ENCODE measurements at regions of chr4 and their contacts with region 1.

Region 1: GRCh38 chr4:128220286-128221235 is 67.1 kb downstream of the PGRMC2 start:
- DNase-seq: no peak
- H3K4me3 ChIP-seq: no peak overlapping the region
- H3K4me3 Mint-ChIP-seq: no peak overlapping the region
- H3K27ac Mint-ChIP-seq: no peak overlapping the region
- H3K4me1 ChIP-seq: no peaks in the 10 kb centered on the region
- H3K4me1 Mint-ChIP-seq: no peaks in the 10 kb centered on the region
- H3K27me3 ChIP-seq: no peaks in the 10 kb centered on the region
- H3K27me3 Mint-ChIP-seq: no peaks in the 10 kb centered on the region
- CTCF ChIP-seq: no peak

Region 2: DNA sequence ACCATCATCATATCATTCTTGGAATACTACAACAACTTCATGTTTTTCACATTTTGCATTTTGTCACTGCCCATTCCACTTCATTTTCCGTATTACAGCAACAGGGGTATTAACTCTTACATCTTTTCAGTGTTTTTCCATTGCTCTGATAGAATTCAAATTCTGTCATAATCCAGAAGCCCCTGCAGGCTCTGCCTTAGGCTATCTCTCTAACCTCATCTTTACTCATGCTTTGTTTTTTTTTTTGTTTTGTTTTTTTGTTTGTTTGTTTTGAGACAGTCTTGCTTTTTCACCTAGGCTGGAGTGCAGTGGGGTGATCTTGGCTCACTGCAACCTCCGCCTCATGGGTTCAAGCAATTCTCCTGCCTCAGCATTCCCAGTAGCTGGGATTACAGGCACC is 163.8 kb before region 1 on chr4:
- CTCF ChIA-PET with region 1: no interaction called
- POLR2A ChIA-PET with region 1: no interaction called
- intact Hi-C with region 1: no loop called
- DNase-seq: no peak
- H3K4me3 ChIP-seq: no peak overlapping the region
- H3K4me3 Mint-ChIP-seq: no peak overlapping the region
- H3K27ac Mint-ChIP-seq: no peak overlapping the region
- H3K4me1 ChIP-seq: no peaks in the 10 kb centered on the region
- H3K4me1 Mint-ChIP-seq: no peaks in the 10 kb centered on the region
- H3K27me3 ChIP-seq: no peaks in the 10 kb centered on the region
- H3K27me3 Mint-ChIP-seq: no peaks in the 10 kb centered on the region
- CTCF ChIP-seq: no peak

Region 3: GRCh38 chr4:128068935-128069334 is 151.6 kb before region 1 on chr4:
- CTCF ChIA-PET with region 1: no interaction called
- POLR2A ChIA-PET with region 1: no interaction called
- intact Hi-C with region 1: loop called (anchors 2 kb)
- DNase-seq: peak; percentile 52 to 56
- H3K4me3 ChIP-seq: no peak overlapping the region
- H3K4me3 Mint-ChIP-seq: no peak overlapping the region
- H3K27ac Mint-ChIP-seq: no peak overlapping the region
- H3K4me1 ChIP-seq: no peaks in the 10 kb centered on the region; the same call in 1 of the 2 replicates
- H3K4me1 Mint-ChIP-seq: peaks cover 5% of the 10 kb centered on the region
- H3K27me3 ChIP-seq: no peaks in the 10 kb centered on the region
- H3K27me3 Mint-ChIP-seq: no peaks in the 10 kb centered on the region
- CTCF ChIP-seq: peak; percentile 17 to 33

Measured in Caco-2 (cell line).